Thyroid gland (tissue), 4 donors: ENCODE measurements at regions of chr15 and their contacts with region 1.

Region 1: DNA sequence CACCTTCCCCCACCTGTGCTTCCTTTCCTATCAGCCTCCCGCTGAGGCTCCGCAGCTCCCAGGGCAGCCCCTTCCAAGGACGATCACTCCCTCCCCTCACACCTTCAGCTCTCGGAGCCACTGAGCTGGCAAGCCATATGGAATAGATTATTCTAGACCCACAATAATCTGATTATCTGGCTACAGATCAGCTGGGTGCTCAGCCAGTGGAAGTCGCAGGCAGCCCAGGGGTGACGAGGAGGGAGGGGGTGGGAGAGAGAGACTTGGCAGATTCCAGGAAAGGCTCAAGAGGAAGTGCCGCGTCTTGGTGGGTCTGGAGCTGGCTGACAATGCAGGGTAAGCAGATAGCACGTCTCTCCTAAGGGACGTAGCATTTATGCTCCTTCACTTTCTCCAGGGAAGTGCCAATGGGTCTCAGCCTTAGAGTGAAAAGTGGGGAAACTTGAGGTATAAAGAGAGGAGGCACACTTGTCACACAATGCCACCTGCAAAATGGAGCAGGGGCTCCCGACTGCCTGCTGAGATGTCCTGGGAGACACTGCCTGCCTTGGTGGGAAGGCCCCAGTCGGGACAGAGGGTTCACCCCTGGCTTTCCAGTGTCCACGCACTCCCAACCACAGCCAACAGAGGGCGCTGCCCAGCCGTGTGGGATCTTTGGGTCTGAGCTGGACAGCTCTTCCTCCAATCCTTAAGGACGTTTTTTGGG is 9.4 kb upstream of the MESP1 start:
- DNase-seq: peak; percentile 74 to 84
- H3K4me3 ChIP-seq: no peak overlapping the region
- H3K27ac ChIP-seq: no peak overlapping the region
- H3K4me1 ChIP-seq: peaks cover 0 to 2% of the 10 kb centered on the region in 2 donors
- H3K27me3 ChIP-seq: no peaks in the 10 kb centered on the region
- CTCF ChIP-seq: peak; percentile 85 to 97 (median 90)
- POLR2A ChIP-seq: no peak

Region 2: DNA sequence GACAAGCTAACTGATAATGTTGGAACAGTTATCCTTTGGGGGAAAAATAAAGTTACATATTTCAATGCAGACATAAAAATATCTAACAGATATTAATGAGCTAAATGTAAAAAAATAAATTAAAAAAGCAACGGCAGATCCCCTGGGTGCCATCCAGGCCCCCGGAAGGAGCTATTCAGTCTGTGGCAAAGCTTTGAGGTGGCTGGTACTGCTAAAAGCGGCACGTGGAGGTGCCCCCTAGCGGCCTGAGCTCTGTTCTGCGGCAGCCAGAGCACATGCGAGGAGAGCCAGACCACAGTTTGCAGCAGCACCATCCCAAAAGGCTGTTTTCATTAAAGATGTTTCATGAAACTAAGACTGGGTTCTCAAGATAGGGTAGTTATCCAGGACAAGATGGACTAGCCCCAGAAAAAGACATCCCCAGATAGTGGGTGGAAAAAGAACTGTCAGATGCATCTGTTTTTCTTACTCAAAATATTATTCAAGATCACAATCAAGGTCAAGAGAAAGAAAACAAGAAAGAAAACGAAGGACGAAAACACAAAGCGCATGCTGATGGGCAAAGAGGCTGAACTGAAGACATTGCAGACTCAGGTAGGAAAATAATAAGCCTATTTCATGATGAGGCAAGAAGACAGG is 114.6 kb after region 1 on chr15:
- intact Hi-C with region 1: loop called (anchors 5 kb)
- DNase-seq: peak; percentile 81 to 84
- H3K4me3 ChIP-seq: no peak overlapping the region
- H3K27ac ChIP-seq: no peak overlapping the region
- H3K4me1 ChIP-seq: peaks cover 0 to 5% of the 10 kb centered on the region in 2 donors
- H3K27me3 ChIP-seq: no peaks in the 10 kb centered on the region
- CTCF ChIP-seq: peak; percentile 79 to 92 (median 82)
- POLR2A ChIP-seq: no peak

Region 3: DNA sequence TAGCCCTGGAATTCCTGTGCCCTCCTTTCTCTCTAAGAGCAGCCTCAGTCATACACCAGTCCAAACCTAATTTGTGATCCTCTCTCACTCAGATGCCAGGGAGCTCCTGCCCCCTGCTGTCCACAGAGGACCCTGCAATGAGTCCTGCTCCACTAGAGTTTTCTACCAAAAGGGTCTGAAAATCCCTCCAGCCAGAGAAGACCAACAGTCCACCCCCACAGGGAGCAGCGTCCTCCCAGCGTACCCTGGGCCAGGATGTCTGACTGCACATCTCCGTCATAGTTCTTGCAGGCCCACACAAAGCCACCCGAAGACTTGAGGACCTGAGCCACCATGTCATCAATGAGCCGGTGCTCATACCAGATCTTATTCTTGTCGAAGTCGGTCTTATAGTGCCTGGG is 326.4 kb after region 1 on chr15:
- intact Hi-C with region 1: loop called (anchors 10 kb)
- DNase-seq: peak; percentile 37 to 50
- H3K4me3 ChIP-seq: no peak overlapping the region
- H3K27ac ChIP-seq: no peak overlapping the region
- H3K4me1 ChIP-seq: no peaks in the 10 kb centered on the region
- H3K27me3 ChIP-seq: no peaks in the 10 kb centered on the region
- CTCF ChIP-seq: peak; percentile 6 to 67 (median 52)
- POLR2A ChIP-seq: no peak